ENCODE measurements at regions of chr20 and their contacts with region 1.

Region 1: DNA sequence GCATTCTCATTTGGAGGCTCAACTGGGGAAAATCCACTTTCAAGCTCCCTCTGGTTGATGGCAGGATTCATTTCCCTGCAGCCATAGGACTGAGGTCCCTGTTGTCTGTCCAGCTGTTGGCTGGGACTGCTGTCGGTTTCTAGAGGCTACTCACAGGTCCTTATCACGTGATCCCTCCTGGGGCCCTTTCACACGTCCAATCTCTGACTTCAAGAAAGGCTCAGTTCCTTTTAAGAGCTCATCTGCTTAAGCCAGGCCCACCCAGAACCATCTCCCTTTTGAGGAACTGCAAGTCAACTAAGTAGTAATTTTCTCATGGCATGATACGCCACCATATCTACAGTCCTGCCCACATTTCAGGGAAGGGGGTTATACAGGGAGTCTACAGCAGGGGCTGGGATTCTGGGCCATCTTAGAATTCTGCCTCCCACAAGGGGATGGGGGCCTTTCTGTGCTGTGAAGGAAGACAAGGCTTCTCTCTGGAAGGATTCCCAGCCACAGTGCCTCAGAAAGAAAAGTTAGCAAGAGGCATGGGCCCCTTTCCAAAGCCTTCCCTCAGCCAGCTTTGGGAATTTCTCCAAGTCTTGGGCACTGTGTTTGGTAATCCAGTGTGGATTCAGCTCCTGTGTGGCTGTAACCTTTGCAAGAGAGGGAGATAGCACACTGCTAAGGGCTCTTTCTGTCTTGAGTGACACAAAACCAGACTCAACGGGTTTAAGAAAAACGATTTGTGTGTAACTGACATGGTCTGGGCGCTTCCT is 66.4 kb downstream of the CTCFL start:
- DNase-seq: no peak
- ATAC-seq: peak; percentile 54

Region 2: DNA sequence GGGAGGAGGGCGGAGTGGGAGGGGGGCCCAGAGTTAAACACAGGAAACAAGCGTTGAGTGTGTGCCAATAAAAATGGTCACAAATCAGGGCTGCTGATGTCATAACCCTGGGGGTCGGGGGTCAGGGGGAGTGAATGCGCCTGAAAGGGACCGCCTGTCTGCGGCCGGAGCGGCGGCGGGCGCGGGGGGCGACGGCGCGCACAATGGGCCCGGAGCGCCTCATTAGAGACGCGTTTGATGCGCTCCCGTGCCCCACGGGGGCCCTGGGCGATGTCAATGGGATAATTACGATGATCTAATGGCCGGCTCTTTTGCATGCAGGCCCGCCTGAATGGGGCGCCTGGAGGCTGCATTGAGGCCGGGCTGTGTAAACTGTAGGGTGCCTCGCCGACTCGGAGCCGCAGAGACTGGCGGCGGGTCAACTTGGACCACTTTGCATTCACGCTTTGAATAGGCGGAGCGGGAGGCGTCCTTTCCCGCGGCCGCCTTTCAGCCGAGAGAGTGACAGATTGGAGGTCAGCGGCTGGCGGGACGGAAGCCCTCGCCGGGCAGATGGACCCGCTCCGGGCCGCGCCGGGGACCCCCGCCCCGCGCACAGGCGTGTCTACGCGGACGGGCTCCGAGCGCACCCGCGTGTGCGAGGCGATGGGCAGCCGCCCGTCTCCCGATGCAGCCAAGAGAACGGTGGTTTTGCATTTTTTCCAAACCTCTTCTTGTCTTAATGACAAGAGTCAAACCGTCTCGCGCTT is 533.3 kb before region 1 on chr20:
- intact Hi-C with region 1: no loop called
- DNase-seq: no peak
- ATAC-seq: no peak

Region 3: DNA sequence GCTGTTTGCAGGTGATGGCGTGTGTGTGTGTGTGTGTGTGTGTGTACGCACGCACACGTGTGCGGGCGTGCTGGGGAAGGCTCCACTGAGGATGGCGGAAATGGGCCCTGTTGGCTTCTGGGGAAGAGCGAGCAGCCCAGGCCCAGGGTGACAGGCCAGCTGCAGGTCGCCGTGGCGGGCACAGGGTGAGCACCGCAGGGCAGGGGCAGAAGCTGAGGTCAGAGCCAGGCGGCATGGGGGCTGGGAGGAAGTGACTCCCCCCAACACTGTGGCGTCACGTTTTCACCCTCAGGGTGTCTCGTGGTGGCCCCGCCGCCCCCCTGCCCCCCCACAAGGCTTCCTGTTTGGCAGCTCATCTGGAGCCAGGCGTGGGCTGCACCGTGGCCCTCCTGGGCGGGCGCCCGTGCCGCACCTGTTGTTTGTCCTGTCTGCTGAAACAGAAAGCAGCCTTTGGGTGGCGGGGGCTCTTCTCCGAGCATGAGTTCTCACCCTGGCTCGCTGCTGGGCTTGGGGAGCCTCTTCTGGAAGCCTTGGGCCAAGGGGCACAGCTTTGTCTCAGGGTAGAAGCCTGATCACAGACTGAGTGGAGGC is 60.3 kb before region 1 on chr20:
- intact Hi-C with region 1: loop called (anchors 5 kb)
- DNase-seq: peak; percentile 70
- ATAC-seq: peak; percentile 5